Activated naive CD4-positive, alpha-beta T cell treated with anti-CD3 and anti-CD28 coated beads, Interleukin-2, amount 10 ng/mL, durations not matched to agents 7 days and 5 days (primary cell): ENCODE measurements at regions of chr19 and their contacts with region 1.

Region 1: GRCh38 chr19:14136509-14137281 is at the start of gene ASF1B:
- DNase-seq: peak; percentile 99
- H3K4me3 Mint-ChIP-seq: peak within 1 kb of the TSS; percentile 80
- H3K27ac Mint-ChIP-seq: peak within 1 kb of the TSS; percentile 93
- H3K4me1 Mint-ChIP-seq: peaks cover 57% of the 10 kb centered on the region
- H3K27me3 Mint-ChIP-seq: no peaks in the 10 kb centered on the region

Region 2: GRCh38 chr19:13983213-13983908 is 153.3 kb before region 1 on chr19:
- CTCF ChIA-PET with region 1: no interaction called
- DNase-seq: peak; percentile 48
- H3K4me3 Mint-ChIP-seq: no peak overlapping the region
- H3K27ac Mint-ChIP-seq: peak overlapping the region; percentile 7
- H3K4me1 Mint-ChIP-seq: peaks cover 79% of the 10 kb centered on the region
- H3K27me3 Mint-ChIP-seq: peaks cover 4% of the 10 kb centered on the region

Region 3: GRCh38 chr19:14114854-14115253 is 21.8 kb before region 1 on chr19:
- CTCF ChIA-PET with region 1: interaction called, 16 read pairs
- DNase-seq: peak; percentile 69
- H3K4me3 Mint-ChIP-seq: no peak overlapping the region
- H3K27ac Mint-ChIP-seq: no peak overlapping the region
- H3K4me1 Mint-ChIP-seq: peaks cover 61% of the 10 kb centered on the region
- H3K27me3 Mint-ChIP-seq: no peaks in the 10 kb centered on the region

Region 4: GRCh38 chr19:14147797-14148605 is 11.3 kb after region 1 on chr19:
- CTCF ChIA-PET with region 1: interaction called, 11 read pairs
- DNase-seq: peak; percentile 66
- H3K4me3 Mint-ChIP-seq: peak overlapping the region; percentile 81
- H3K27ac Mint-ChIP-seq: peak overlapping the region; percentile 96
- H3K4me1 Mint-ChIP-seq: peaks cover 53% of the 10 kb centered on the region
- H3K27me3 Mint-ChIP-seq: no peaks in the 10 kb centered on the region

Region 5: DNA sequence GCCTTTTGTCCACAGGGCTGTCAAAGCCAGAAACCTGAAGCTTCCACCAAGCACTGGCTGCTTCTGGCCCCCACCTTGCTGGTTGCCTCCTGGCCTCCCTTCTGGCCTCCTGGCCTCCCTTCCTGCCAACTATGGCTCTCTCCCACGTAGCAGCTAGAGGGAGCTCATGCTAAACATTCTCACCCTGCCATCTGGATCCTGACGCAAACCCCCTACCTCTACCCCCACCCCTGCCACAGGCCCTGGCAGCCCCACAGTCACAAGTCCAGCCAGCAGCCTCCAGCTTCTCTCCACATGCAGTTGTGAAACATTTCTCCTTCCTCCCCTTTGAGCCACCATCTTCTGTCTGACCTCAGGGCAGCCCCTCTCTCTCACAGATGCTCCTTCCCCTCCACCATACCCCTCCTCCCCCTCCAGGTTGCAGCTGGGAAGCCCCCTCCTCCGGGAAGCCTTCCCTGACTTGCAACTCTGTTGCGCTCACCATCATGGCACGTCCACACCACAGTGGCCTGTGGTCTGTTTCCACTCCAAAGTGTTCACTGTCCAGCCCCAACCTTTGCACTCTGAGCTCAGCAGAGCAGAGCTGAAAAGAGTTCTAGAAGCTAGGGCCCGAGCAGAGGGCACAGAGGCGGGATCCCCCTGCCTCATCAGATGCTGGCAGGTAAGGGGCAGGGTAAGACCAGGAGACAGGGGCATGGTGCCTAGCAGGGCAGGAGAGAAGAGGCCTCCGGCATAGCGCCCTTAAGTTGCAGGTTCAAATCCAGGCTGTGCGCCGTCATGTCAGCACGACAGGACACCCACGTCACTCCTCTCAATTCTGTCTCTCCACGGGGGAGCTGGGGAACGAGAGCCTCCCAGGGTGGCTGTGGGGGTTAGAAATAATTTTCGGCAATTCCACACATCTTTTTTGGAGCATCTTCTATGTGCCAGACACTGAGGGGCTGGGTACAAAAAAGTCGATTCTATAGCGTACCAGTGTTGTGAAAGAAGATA is 62.0 kb after region 1 on chr19:
- CTCF ChIA-PET with region 1: interaction called, 17 read pairs
- DNase-seq: no peak
- H3K4me3 Mint-ChIP-seq: no peak overlapping the region
- H3K27ac Mint-ChIP-seq: peak overlapping the region; percentile 24
- H3K4me1 Mint-ChIP-seq: peaks cover 14% of the 10 kb centered on the region
- H3K27me3 Mint-ChIP-seq: peaks cover 33% of the 10 kb centered on the region

Region 6: GRCh38 chr19:14347999-14348889 is 211.5 kb after region 1 on chr19:
- CTCF ChIA-PET with region 1: interaction called, 18 read pairs
- DNase-seq: peak; percentile 75
- H3K4me3 Mint-ChIP-seq: peak overlapping the region; percentile 6
- H3K27ac Mint-ChIP-seq: peak overlapping the region; percentile 24
- H3K4me1 Mint-ChIP-seq: peaks cover 34% of the 10 kb centered on the region
- H3K27me3 Mint-ChIP-seq: peaks cover 26% of the 10 kb centered on the region

Region 7: DNA sequence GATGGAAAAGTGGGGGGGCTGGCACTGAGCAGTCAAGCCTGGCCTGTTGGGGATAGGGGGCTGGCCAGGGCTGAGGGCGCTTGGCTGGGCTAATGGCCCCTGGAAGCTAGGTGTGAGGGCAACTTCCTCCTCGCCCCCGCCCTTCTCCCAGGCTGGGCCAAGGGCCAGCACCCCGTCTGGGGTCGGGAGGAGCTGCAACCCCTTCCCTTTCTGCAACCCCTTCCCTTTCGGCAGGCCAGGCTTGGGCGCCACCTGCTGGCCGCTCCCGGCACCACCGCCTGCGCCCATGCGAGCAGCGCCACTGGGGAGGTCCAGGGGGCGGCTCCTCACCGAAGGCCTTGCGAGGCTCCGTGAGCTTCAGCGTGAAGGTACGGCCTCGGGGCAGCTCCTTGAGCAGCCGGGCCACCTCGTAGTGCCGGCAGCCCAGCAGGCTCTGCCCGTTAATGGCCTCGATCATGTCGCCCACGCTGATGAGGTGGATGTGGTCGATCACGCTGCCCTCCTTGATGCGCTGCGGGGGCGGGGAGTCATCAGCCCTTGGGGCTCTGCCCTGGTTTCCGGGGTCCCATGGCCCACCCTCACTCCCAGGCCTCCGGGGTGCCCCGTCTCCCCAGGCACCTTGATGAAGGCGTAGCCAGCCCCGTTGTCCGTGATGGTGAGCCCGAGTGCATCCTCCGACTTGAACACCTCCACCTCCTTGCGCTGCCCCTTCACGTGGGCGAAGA is 343.4 kb after region 1 on chr19:
- CTCF ChIA-PET with region 1: interaction called, 13 read pairs
- DNase-seq: peak; percentile 82
- H3K4me3 Mint-ChIP-seq: no peak overlapping the region
- H3K27ac Mint-ChIP-seq: no peak overlapping the region
- H3K4me1 Mint-ChIP-seq: peaks cover 21% of the 10 kb centered on the region
- H3K27me3 Mint-ChIP-seq: peaks cover 17% of the 10 kb centered on the region